Mammary epithelial cell (primary cell): ENCODE measurements at regions of chr2 and their contacts with region 1.

Region 1: GRCh38 chr2:119641562-119642258 is 37.3 kb upstream of the TMEM177 start:
- DNase-seq: peak; percentile 67
- H3K4me3 ChIP-seq: no peak overlapping the region
- H3K27ac ChIP-seq: no peak overlapping the region
- H3K4me1 ChIP-seq: no peaks in the 10 kb centered on the region
- H3K27me3 ChIP-seq: peaks cover 2% of the 10 kb centered on the region
- CTCF ChIP-seq: peak; percentile 98

Region 2: DNA sequence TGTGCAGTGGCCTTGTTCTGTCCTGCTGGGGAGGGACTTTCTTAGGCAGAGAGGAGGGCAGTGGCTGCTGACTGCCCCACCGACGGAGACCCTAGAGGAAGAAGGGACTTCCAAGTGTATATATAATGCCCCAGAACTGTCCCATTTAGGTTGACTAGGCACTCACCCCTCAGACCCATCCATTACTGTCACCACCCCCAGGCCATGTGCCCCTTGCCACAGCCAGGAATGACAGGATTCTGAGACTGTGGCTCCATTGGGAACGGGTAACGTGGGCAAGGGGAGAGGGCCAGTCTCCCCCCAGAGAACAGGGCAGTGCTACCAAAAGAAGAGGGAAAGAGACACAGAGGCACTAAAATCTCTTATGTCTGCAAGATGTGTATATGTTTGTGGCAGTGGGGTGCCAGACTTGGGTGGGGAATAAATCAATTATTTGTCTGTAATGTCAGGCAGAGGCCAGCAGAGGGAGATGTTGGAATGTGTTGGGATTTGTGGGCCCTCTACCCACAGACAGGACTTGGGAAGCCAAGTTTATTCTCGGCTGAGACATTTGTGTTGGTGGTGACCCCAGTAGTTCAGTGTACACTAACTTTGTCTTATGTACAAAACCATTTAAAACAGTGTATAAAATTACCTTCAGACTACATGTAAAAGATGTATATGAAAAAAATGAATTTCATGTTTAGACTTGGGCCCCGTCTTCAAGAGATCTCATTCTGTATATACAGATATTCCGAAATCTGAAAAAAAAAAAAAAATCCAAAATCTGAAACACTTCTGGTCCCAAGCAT is 234.1 kb before region 1 on chr2:
- CTCF ChIA-PET with region 1: no interaction called
- dilution Hi-C with region 1: no loop called
- in situ Hi-C with region 1: no loop called
- intact Hi-C with region 1: loop called (anchors 5 kb)
- DNase-seq: peak; percentile 25
- H3K4me3 ChIP-seq: no peak overlapping the region
- H3K27ac ChIP-seq: no peak overlapping the region
- H3K4me1 ChIP-seq: no peaks in the 10 kb centered on the region
- H3K27me3 ChIP-seq: peaks cover 4% of the 10 kb centered on the region
- CTCF ChIP-seq: peak; percentile 75 to 76

Region 3: GRCh38 chr2:119659601-119660342 is 18.1 kb after region 1 on chr2:
- CTCF ChIA-PET with region 1: no interaction called
- dilution Hi-C with region 1: no loop called
- in situ Hi-C with region 1: no loop called
- intact Hi-C with region 1: loop called (anchors 1 kb)
- DNase-seq: no peak
- H3K4me3 ChIP-seq: no peak overlapping the region
- H3K27ac ChIP-seq: no peak overlapping the region
- H3K4me1 ChIP-seq: no peaks in the 10 kb centered on the region
- H3K27me3 ChIP-seq: no peaks in the 10 kb centered on the region
- CTCF ChIP-seq: peak; percentile 89 to 96

Region 4: DNA sequence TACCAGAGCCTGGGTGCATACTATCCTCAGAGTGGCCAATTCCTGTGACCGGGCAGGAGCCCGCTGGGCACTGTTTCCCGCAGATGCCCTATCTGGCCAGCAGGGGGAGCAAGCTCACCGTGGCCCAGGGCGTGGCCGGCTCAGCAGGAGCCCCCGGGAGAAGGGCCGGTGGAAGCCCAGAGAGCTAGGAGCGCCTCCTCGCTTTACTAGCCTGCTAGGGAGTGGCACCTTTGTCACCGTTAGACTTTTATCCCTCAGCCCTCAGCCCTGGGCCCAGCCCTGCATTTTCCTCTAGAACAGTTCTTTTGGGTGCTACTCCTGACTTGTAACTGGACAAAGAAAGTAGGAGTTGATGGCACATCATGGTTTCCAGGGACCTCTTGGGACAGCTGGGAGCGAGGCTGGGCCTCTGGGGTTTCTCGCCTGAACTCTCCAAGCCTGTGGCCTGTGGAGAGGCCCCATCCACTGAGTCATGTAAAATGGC is 61.2 kb after region 1 on chr2:
- CTCF ChIA-PET with region 1: no interaction called
- dilution Hi-C with region 1: no loop called
- in situ Hi-C with region 1: no loop called
- intact Hi-C with region 1: loop called (anchors 10 kb)
- DNase-seq: peak; percentile 44
- H3K4me3 ChIP-seq: no peak overlapping the region
- H3K27ac ChIP-seq: no peak overlapping the region
- H3K4me1 ChIP-seq: no peaks in the 10 kb centered on the region
- H3K27me3 ChIP-seq: no peaks in the 10 kb centered on the region
- CTCF ChIP-seq: peak; percentile 90 to 99

Region 5: DNA sequence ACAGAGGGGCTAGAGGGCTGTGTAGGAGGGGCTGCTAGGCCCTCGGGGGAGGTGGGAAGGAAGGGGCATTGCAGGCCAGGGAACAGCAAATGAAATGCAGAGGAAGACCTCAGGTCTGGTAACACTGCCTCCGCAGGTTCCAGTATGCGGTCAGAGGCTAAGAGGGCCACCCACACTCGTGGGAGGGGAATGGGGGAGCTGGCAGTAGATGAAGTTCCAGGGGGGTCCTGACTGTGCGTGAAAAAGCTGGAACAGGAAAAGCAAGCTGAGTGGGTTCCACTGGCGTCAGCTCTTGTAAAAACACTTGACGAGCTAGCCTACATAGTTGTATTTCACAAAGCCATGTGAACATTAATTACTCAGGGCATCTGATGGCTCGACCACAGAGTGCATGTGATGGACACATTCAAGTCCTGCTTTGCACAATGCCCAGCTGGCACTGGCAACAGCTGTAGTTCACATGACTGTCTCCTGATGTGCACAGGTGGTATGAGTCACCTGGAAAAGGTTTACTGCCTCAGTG is 89.0 kb after region 1 on chr2:
- CTCF ChIA-PET with region 1: no interaction called
- dilution Hi-C with region 1: loop called (anchors 5 kb)
- in situ Hi-C with region 1: no loop called
- intact Hi-C with region 1: no loop called
- DNase-seq: peak; percentile 75
- H3K4me3 ChIP-seq: no peak overlapping the region
- H3K27ac ChIP-seq: no peak overlapping the region
- H3K4me1 ChIP-seq: no peaks in the 10 kb centered on the region
- H3K27me3 ChIP-seq: no peaks in the 10 kb centered on the region
- CTCF ChIP-seq: no peak

Region 6: DNA sequence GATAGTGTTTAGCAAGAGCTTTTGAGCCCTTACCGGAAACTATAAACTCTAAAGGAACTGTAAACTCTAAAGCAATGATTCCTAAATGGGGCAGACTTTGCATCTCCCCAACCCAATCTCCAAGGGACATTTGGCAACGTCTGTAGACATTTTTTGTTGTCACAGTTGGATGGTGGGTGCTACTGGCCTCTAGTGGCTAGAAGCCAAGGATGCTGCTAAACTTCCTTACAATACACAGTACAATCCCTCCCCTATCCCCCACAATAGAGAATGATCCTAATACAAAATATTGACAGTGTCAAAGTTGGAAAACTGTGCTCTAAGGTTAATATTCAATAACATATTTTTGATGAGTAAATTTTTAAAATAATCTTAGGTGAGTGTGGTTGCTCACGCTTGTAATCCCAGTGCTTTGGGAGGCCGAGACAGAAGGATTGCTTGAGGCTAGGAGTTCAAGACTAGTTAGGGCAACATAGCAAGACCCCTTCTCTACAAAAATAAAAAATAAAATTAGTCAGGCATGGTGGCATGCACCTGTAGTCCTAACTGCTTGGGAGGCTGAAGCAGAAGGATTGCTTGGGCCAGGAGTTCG is 184.8 kb after region 1 on chr2:
- CTCF ChIA-PET with region 1: no interaction called
- dilution Hi-C with region 1: no loop called
- in situ Hi-C with region 1: no loop called
- intact Hi-C with region 1: loop called (anchors 5 kb)
- DNase-seq: no peak
- H3K4me3 ChIP-seq: no peak overlapping the region
- H3K27ac ChIP-seq: no peak overlapping the region
- H3K4me1 ChIP-seq: no peaks in the 10 kb centered on the region
- H3K27me3 ChIP-seq: no peaks in the 10 kb centered on the region
- CTCF ChIP-seq: peak; percentile 65 to 72